Activated CD4-positive, alpha-beta T cell treated with anti-CD3 and anti-CD28 coated beads for 36 hours (primary cell): ENCODE measurements at regions of chr2 and their contacts with region 1.

Region 1: GRCh38 chr2:27211829-27212627 is at the starts of genes ATRAID and SLC5A6:
- DNase-seq: peak; percentile 93
- ATAC-seq: peak; percentile 90
- H3K4me3 Mint-ChIP-seq: peak within 1 kb of the TSS; percentile 99
- H3K27ac Mint-ChIP-seq: peak within 1 kb of the TSS; percentile 100
- H3K4me1 Mint-ChIP-seq: peaks cover 34% of the 10 kb centered on the region
- H3K27me3 Mint-ChIP-seq: no peaks in the 10 kb centered on the region
- total RNA-seq, gene ATRAID: 69.9 to 83.4 TPM
- total RNA-seq, gene SLC5A6: 27.3 to 34.9 TPM

Region 2: DNA sequence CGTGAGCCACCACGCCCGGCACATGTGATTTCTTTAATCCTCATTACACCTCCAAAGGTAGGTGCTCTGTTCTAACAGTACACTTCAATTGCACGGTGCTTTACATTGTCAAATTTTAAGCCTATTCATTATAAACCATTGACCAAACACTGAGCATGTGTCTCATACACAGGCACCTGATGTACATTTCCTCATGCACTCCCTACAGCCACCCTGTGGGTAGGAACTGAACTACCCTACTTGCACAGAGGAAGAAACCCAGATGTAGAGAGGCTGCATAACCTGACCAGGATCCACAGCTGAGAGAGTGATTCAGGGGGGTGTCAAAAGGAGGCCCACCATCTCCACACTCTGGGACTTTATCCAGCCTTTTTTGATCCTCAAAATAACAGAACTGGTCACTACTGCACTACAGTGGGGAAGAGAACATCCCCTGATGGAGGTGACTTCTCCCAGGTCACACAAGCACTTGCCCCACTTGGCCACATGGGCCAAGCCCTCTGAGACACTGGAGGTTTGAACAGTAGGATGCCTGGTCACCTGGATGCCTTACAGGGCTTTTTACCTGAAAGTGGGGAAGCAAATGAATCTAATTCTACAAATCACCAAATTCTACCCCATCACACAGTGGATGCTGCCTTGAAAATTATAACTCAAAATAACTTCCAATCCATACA is 371.0 kb before region 1 on chr2:
- CTCF ChIA-PET with region 1: no interaction called
- POLR2A ChIA-PET with region 1: no interaction called
- intact Hi-C with region 1: no loop called
- DNase-seq: no peak
- ATAC-seq: peak; percentile 66
- H3K4me3 Mint-ChIP-seq: no peak overlapping the region
- H3K27ac Mint-ChIP-seq: no peak overlapping the region
- H3K4me1 Mint-ChIP-seq: no peaks in the 10 kb centered on the region
- H3K27me3 Mint-ChIP-seq: peaks cover 31% of the 10 kb centered on the region

Region 3: DNA sequence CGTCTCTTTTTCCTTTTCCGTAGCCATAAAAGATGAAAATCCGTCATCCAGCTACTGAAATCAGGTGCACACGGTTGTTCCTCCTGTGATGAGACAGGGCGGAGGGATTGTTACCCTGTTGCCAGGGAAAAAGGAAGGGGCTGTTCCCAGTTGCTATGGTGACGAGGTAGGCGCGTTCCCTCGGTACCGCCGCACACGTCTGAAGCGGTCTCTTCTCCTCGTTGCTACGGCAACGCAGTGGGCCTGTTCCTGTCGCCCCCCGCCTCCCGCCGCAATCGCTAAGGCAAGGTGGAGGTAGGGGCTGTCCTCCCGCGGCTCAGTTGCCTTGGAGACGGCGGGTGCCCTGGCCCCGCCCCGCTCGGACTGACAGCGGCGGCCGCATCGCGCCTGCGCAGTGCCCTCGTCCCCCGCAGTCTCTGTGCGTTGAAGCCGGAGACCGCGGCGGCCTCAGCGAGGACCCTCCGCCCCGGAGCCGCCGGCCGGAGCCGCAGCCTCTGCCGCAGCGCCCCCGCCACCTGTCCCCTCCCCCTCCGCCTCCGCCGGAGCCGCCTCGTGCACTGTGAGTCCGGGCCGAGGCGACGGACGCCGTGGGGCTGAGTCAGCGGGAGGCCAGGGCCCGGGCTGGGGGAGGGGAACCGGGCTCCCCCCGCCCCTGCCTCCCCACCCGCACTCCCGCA is 241.6 kb before region 1 on chr2 and contains the start of gene MAPRE3:
- CTCF ChIA-PET with region 1: no interaction called
- POLR2A ChIA-PET with region 1: no interaction called
- intact Hi-C with region 1: loop called in 1 of 2 experiments (anchors 1 kb)
- DNase-seq: peak; percentile 86
- ATAC-seq: peak; percentile 93
- H3K4me3 Mint-ChIP-seq: peak within 1 kb of the TSS; percentile 72
- H3K27ac Mint-ChIP-seq: peak within 1 kb of the TSS; percentile 5
- H3K4me1 Mint-ChIP-seq: peaks cover 15% of the 10 kb centered on the region
- H3K27me3 Mint-ChIP-seq: peaks cover 11% of the 10 kb centered on the region
- total RNA-seq, gene MAPRE3: 3.2 to 4.1 TPM

Region 4: GRCh38 chr2:27071277-27071989 is 140.6 kb before region 1 on chr2 and contains the start of gene OST4:
- CTCF ChIA-PET with region 1: no interaction called
- POLR2A ChIA-PET with region 1: no interaction called
- intact Hi-C with region 1: loop called in 1 of 2 experiments (anchors 1 kb)
- DNase-seq: peak; percentile 94
- ATAC-seq: peak; percentile 89
- H3K4me3 Mint-ChIP-seq: peak within 1 kb of the TSS; percentile 96
- H3K27ac Mint-ChIP-seq: peak within 1 kb of the TSS; percentile 91
- H3K4me1 Mint-ChIP-seq: peaks cover 66% of the 10 kb centered on the region
- H3K27me3 Mint-ChIP-seq: no peaks in the 10 kb centered on the region
- total RNA-seq, gene OST4: 305 to 406 TPM

Region 5: GRCh38 chr2:27095745-27096651 is 116.0 kb before region 1 on chr2:
- CTCF ChIA-PET with region 1: interaction called, 3 read pairs
- POLR2A ChIA-PET with region 1: no interaction called
- intact Hi-C with region 1: loop called (anchors 1 to 5 kb)
- DNase-seq: peak; percentile 72
- ATAC-seq: peak; percentile 98
- H3K4me3 Mint-ChIP-seq: peak overlapping the region; percentile 35
- H3K27ac Mint-ChIP-seq: peak overlapping the region; percentile 30
- H3K4me1 Mint-ChIP-seq: peaks cover 10% of the 10 kb centered on the region
- H3K27me3 Mint-ChIP-seq: no peaks in the 10 kb centered on the region

Region 6: DNA sequence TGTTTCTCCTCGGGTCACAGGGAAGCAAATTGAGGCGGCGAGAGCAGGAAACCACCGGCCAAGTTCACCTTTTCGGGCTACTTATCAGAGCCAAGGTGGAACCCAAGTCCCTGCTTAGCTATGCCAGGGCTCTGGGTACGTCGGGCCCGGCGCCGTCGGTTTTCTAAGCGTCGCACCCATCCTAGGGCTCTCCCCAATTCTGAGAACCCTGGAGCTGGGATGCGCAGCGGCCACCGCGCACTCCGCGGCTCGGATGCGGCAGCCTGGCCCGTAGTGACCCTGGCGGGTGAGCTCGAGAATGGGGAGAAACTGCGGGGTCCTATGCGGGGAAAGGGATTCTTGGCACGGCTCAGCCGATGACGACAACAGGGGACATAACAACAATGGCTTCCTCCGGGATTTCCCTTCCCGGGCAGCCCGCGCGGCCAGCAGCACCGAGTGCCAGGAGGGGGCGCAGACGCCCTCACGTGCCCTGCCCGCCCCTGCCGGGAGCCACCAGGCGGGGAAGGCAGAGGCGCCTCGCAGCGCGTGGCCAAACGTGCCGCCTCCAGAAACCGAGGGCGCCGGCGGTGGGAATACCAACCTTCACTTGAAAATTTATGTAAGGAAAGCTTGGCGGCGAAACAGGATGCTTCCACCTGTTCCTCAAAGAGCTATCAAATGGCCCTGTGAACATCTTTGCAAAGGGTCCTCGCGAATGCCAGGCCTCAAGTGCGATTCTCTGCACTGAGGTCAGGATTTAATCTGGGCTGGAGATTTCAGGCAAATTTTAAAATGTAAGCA is 52.9 kb after region 1 on chr2:
- CTCF ChIA-PET with region 1: no interaction called
- POLR2A ChIA-PET with region 1: interaction called, 3 read pairs
- intact Hi-C with region 1: loop called in 1 of 2 experiments (anchors 2 kb)
- DNase-seq: peak; percentile 80
- ATAC-seq: peak; percentile 67
- H3K4me3 Mint-ChIP-seq: peak overlapping the region; percentile 53
- H3K27ac Mint-ChIP-seq: no peak overlapping the region
- H3K4me1 Mint-ChIP-seq: peaks cover 23% of the 10 kb centered on the region
- H3K27me3 Mint-ChIP-seq: peaks cover 41% of the 10 kb centered on the region

Region 7: DNA sequence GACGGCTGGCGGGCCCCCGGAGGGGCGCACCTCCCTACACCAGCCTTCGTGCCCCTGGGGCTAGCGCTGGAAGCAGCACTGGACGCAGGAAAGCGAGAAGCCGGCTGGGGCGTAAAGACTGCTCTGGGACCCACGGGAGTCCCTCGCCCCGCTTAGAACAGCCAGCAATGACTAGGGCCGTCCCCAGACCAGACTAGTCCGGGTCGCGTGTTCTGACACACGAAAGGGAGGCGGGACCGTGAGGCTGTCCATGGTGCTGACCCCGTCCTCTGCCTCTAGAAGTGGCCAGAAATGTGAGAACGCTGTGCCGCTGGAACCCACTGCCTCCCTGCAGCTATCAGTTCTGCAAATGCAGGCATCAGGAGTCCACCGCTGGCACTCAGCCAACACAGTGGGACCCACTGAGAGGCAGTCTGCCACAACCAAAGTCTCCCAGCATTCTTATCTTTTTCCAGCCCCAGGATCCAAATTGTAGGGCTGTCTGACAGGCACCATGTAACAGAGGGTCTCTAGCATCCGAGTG is 96.4 kb after region 1 on chr2 and contains the start of gene UCN:
- CTCF ChIA-PET with region 1: no interaction called
- POLR2A ChIA-PET with region 1: no interaction called
- intact Hi-C with region 1: no loop called
- DNase-seq: no peak
- ATAC-seq: no peak
- H3K4me3 Mint-ChIP-seq: no peak within 1 kb of the TSS
- H3K27ac Mint-ChIP-seq: no peak within 1 kb of the TSS
- H3K4me1 Mint-ChIP-seq: no peaks in the 10 kb centered on the region
- H3K27me3 Mint-ChIP-seq: peaks cover 10% of the 10 kb centered on the region
- total RNA-seq, gene UCN: 1.4 to 1.5 TPM

Region 8: GRCh38 chr2:27370026-27370815 is 158.2 kb after region 1 on chr2 and contains the starts of genes EIF2B4 and SNX17:
- CTCF ChIA-PET with region 1: no interaction called
- POLR2A ChIA-PET with region 1: no interaction called
- intact Hi-C with region 1: loop called in 1 of 2 experiments (anchors 1 kb)
- DNase-seq: peak; percentile 99
- ATAC-seq: peak; percentile 95
- H3K4me3 Mint-ChIP-seq: peak within 1 kb of the TSS; percentile 90
- H3K27ac Mint-ChIP-seq: peak within 1 kb of the TSS; percentile 95
- H3K4me1 Mint-ChIP-seq: peaks cover 39% of the 10 kb centered on the region
- H3K27me3 Mint-ChIP-seq: no peaks in the 10 kb centered on the region
- total RNA-seq, gene EIF2B4: 31.0 to 39.2 TPM
- total RNA-seq, gene SNX17: 63.9 to 82.1 TPM

Region 9: DNA sequence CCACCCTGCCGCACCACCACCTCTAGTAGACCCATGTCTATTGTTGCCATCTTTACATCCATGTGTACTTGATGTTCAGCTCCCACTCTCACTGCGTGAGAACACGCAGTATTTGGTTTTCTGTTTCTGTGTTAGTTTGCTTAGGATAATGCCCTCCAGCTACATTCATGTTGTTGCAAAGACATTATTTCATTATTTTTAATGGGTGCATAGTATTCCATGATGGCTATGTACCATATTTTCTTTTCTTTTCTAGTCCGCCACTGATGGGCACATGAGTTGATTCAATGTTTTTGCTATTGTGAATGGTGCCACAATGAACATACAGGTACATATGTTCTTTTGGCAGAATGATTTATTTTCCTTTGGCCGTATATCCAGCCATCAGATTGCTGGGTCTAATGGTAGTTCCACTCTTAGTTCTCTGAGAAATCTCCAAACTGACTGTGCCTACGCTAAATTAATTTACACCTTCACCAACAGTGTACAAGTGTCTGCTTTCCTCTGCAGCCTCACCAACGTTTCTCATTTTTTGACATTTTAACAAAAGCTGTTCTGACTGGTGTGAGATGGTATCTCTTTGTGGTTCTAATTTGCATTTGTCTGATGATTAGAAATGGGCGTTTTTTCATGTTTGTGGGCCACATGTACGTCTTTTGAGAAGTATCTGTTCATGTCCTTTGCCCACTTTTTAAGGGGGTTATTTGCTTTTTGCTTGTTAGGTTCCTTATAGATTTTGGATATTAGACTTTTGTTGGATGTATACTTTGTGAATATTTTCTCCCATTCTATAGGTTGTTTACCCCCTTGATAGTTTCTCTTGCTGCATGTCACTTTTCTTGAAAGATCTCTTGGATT is 179.0 kb after region 1 on chr2:
- CTCF ChIA-PET with region 1: no interaction called
- POLR2A ChIA-PET with region 1: no interaction called
- intact Hi-C with region 1: no loop called
- DNase-seq: no peak
- ATAC-seq: peak; percentile 70
- H3K4me3 Mint-ChIP-seq: peak overlapping the region; percentile 16
- H3K27ac Mint-ChIP-seq: peak overlapping the region; percentile 77
- H3K4me1 Mint-ChIP-seq: peaks cover 26% of the 10 kb centered on the region
- H3K27me3 Mint-ChIP-seq: no peaks in the 10 kb centered on the region

Region 10: GRCh38 chr2:27489498-27490397 is 277.7 kb after region 1 on chr2 and contains the start of gene IFT172:
- CTCF ChIA-PET with region 1: no interaction called
- POLR2A ChIA-PET with region 1: no interaction called
- intact Hi-C with region 1: loop called in 1 of 2 experiments (anchors 1 kb)
- DNase-seq: peak; percentile 100
- ATAC-seq: peak; percentile 97
- H3K4me3 Mint-ChIP-seq: peak within 1 kb of the TSS; percentile 75
- H3K27ac Mint-ChIP-seq: peak within 1 kb of the TSS; percentile 63
- H3K4me1 Mint-ChIP-seq: peaks cover 23% of the 10 kb centered on the region
- H3K27me3 Mint-ChIP-seq: peaks cover 11% of the 10 kb centered on the region
- total RNA-seq, gene IFT172: 8.7 TPM